ENCODE measurements at regions of chr5 and their contacts with region 1.

Region 1: DNA sequence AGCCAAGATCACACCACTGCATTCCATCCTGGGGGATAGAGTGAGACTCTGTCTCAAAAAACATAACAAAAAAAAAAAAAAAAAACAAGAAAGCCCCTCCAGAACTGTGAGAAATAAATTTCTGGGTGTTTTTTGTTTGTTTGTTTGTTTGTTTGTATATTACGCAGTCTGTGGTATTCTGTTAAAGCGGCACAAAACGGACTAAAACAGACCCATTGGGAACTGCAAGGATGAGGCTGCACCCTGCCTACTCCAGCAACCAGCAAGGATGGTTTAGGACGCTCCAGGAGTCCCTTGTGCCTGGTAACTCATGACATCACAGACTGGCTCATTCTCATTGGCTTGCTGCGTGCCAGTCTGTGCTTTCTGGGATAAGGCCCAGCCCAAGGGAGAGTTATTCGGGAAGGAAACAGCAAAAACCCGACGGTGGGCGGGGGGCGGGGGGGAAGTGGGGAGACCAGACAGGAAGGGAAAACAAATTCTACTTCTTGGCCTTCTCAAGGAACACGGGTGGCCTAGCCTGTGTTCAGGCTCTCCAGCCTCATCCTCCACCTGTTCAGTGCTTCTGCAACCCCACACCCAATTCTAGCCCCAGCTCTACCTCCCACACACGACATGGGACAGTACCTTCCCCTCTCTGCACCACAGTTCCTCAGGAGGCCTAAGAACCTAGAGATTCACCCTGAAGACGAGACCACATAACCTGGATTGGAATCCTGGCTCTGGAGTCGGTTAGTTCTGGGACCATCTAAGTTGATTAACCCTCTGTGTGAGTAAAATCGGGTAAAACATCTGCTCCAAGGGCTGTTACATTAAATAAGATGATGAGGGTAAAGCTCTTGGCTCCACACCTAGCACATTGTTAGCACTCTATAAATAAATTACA is 2.8 kb downstream of the CD74 start:
- DNase-seq: peak; percentile 63
- H3K4me3 Mint-ChIP-seq: peak overlapping the region; percentile 95
- H3K27ac Mint-ChIP-seq: peak overlapping the region; percentile 99
- H3K4me1 Mint-ChIP-seq: peaks cover 47% of the 10 kb centered on the region
- H3K27me3 Mint-ChIP-seq: no peaks in the 10 kb centered on the region

Region 2: DNA sequence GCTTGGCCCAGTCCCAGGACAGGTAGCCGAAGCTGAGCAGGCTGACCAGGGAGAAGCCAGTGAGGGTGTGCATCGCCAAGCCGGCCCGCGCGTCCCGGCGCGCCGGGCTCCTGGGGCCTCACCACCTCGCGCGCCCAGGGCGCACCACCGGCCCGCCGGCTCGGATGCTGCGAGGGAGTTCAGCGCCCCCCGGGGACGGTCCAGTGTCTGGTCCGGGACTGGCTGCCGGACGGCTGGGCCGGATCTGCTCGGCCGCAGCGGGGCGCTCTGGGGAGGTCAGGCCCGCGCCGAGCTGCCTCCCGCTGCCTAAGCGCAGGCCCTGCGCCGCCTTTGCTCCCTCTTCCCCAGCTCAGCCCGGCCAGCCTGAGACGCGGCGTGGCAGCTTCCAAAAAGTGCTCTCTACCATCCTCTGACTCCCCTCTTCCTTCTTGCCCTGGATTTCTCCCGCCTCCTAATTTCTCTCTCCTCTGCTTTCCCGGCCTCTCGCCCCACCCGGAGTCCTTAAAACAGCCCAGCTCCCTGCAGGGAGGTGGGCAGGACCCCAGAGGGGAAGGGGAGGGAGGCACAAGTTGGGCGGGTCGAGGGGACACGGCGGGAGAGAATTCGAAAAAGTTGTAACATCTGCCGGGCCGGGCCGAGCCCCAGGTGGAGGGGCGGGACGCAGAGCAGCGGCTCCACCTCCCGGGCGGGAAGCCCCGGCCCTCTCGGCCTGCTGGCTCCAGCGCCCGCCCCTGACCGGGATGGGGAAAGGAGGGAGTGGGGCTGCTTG is 107.4 kb before region 1 on chr5 and contains the start of gene ARSI:
- CTCF ChIA-PET with region 1: no interaction called
- POLR2A ChIA-PET with region 1: no interaction called
- DNase-seq: no peak
- H3K4me3 Mint-ChIP-seq: no peak within 1 kb of the TSS
- H3K27ac Mint-ChIP-seq: no peak within 1 kb of the TSS
- H3K4me1 Mint-ChIP-seq: peaks cover 2% of the 10 kb centered on the region
- H3K27me3 Mint-ChIP-seq: peaks cover 40% of the 10 kb centered on the region
- total RNA-seq, gene ARSI: not detected

Region 3: GRCh38 chr5:150398722-150399523 is 11.0 kb before region 1 on chr5:
- CTCF ChIA-PET with region 1: interaction called, 37 read pairs
- POLR2A ChIA-PET with region 1: interaction called, 3 read pairs
- DNase-seq: no peak
- H3K4me3 Mint-ChIP-seq: no peak overlapping the region
- H3K27ac Mint-ChIP-seq: no peak overlapping the region
- H3K4me1 Mint-ChIP-seq: no peaks in the 10 kb centered on the region
- H3K27me3 Mint-ChIP-seq: no peaks in the 10 kb centered on the region

Region 4: GRCh38 chr5:150436141-150436680 is 26.3 kb after region 1 on chr5:
- CTCF ChIA-PET with region 1: interaction called, 11 read pairs
- POLR2A ChIA-PET with region 1: interaction called, 8 read pairs
- DNase-seq: peak; percentile 93
- H3K4me3 Mint-ChIP-seq: no peak overlapping the region
- H3K27ac Mint-ChIP-seq: peak overlapping the region; percentile 37
- H3K4me1 Mint-ChIP-seq: peaks cover 12% of the 10 kb centered on the region
- H3K27me3 Mint-ChIP-seq: peaks cover 2% of the 10 kb centered on the region

Region 5: GRCh38 chr5:150449517-150450339 is 39.8 kb after region 1 on chr5 and contains the start of gene RPS14:
- CTCF ChIA-PET with region 1: interaction called, 30 read pairs
- POLR2A ChIA-PET with region 1: no interaction called
- DNase-seq: peak; percentile 96
- H3K4me3 Mint-ChIP-seq: peak within 1 kb of the TSS; percentile 91
- H3K27ac Mint-ChIP-seq: peak within 1 kb of the TSS; percentile 99
- H3K4me1 Mint-ChIP-seq: peaks cover 36% of the 10 kb centered on the region
- H3K27me3 Mint-ChIP-seq: no peaks in the 10 kb centered on the region
- total RNA-seq, gene RPS14: 2,151 to 2,478 TPM

Region 6: DNA sequence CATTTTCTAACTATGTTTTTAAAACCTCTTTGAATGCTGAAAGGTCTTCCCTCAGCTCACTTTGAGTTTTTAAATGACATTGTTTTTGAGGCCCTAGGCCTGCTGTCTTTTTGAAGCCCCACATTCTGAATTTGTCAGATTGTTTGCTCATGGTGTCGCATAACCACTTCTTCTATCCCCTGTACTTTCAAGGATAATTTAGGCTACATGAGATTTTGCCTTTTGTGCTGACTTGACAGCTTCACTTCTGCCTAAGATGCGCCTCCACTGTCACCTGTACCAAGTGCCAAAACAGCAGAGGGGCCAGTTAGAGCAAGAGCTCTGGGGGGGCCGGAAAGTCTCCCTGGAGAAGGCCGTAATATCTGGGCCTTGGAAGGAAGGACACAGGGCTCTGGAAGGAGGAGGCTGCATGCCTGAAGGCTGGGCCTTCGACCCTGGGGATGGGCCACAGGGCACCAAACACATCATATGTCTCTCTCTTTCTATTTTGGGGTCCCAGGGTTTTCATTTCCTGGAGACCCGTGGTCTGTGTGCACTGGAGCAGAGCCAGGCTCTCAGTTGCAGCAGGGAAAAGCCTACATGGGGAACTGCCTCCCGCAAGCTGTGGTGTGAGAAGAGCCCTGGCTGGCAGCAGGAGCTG is 147.1 kb after region 1 on chr5:
- CTCF ChIA-PET with region 1: no interaction called
- POLR2A ChIA-PET with region 1: no interaction called
- DNase-seq: no peak
- H3K4me3 Mint-ChIP-seq: no peak overlapping the region
- H3K27ac Mint-ChIP-seq: no peak overlapping the region
- H3K4me1 Mint-ChIP-seq: no peaks in the 10 kb centered on the region
- H3K27me3 Mint-ChIP-seq: no peaks in the 10 kb centered on the region

Measured in activated CD4-positive, alpha-beta T cell treated with anti-CD3 and anti-CD28 coated beads, Interleukin-2, amount 10 ng/mL, durations not matched to agents 7 days and 5 days (primary cell).